Activated CD4-positive, alpha-beta T cell treated with anti-CD3 and anti-CD28 coated beads, Interleukin-2, amount 10 ng/mL, durations not matched to agents 7 days and 5 days (primary cell): ENCODE measurements at regions of chr5 and their contacts with region 1.

Region 1: GRCh38 chr5:131548176-131548575 is 86.9 kb downstream of the RAPGEF6 start:
- DNase-seq: peak; percentile 53
- H3K4me3 Mint-ChIP-seq: peak overlapping the region; percentile 91
- H3K27ac Mint-ChIP-seq: peak overlapping the region; percentile 93
- H3K4me1 Mint-ChIP-seq: peaks cover 70% of the 10 kb centered on the region
- H3K27me3 Mint-ChIP-seq: no peaks in the 10 kb centered on the region

Region 2: DNA sequence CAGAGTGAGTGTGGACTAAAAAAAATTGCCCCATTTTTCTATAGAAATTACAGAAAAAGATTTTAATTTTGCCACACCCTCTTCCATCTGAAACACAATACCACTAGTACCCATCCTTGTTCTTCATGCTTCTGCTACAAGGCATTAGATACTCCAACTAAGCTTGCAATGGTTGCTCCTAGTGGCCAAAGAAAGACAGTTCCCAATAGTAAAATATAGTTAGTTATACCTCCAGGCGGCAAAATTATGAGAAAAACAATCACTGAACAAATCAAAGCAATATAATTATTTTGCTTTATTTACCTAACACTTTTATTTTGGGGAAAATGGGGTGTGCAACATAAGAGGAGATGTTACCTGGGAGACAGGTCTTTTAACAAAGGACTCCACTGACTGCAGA is 14.3 kb before region 1 on chr5:
- CTCF ChIA-PET with region 1: interaction called, 19 read pairs
- POLR2A ChIA-PET with region 1: no interaction called
- DNase-seq: no peak
- H3K4me3 Mint-ChIP-seq: no peak overlapping the region
- H3K27ac Mint-ChIP-seq: peak overlapping the region; percentile 3
- H3K4me1 Mint-ChIP-seq: peaks cover 72% of the 10 kb centered on the region
- H3K27me3 Mint-ChIP-seq: no peaks in the 10 kb centered on the region

Region 3: DNA sequence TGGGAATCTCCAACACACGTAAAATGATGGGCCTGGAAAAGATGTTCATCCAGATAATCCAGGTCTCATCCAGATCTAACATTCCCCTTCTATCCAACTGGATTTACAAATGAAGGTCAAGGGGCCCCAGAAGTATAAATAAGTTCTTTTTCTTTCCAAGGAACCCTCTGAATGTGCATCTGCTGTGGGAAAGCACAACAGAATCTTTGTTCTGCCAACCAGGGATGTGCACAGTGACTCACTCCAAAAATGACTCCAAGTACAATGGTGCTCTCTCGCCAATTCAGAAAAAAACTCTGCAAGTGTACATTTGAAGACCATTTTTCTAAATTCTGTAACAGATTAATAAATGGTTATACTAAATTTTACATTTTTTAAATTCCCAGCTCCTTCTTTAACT is 74.5 kb after region 1 on chr5:
- CTCF ChIA-PET with region 1: no interaction called
- POLR2A ChIA-PET with region 1: no interaction called
- DNase-seq: no peak
- H3K4me3 Mint-ChIP-seq: no peak overlapping the region
- H3K27ac Mint-ChIP-seq: no peak overlapping the region
- H3K4me1 Mint-ChIP-seq: peaks cover 34% of the 10 kb centered on the region
- H3K27me3 Mint-ChIP-seq: no peaks in the 10 kb centered on the region